IMR-90 (cell line): ENCODE measurements at regions of chr1 and their contacts with region 1.

Region 1: DNA sequence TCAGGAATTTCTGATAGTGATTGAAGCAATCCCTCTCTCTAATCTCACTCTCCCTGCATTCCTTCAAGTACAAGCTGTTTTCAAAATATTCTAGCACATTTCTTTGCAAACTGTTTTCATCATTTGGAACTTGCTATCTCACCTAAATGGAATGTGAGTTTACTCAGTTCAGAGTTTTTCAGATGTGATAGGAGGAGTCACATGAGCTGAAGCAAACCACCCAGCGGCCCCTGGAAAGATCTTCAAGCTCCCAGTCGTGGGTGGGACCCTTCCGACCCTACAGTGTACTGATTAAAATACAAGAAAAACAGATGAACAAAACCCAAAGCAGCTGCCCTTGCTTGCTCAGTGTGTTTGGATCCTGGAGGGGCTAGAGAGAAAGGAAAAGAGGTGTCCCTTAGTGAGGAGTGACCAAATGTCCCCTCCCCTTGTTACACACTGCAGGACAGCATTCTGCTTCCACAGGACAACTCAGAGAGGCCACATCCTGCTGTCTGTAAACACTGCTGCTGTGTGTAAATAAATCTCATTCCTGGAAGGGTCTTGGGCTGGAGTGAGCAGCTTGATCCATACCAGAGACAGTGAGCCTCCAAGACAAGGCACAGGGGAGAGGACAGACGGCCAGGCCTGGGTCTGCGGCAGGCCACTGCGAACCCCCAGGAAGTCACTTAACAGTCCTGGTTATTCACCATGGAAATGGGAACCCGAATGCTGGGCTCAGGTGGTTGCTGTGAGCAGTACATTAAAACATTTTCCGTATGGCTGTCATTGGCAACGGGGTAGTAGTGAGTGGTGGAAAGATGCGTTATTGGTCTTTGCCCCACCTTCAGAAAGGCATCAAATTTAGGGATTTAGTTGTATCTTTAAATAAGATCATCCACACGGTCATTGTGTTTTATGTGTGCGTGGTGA is 229.2 kb downstream of the RHOU start:
- DNase-seq: peak; percentile 94
- ATAC-seq: peak; percentile 96
- H3K4me3 ChIP-seq: no peak overlapping the region
- H3K27ac ChIP-seq: peak overlapping the region; percentile 97
- H3K4me1 ChIP-seq: peaks cover 12% of the 10 kb centered on the region
- H3K27me3 ChIP-seq: no peaks in the 10 kb centered on the region
- CTCF ChIP-seq: no peak
- POLR2A ChIP-seq: no peak
- RAD21 ChIP-seq: 0 out of 2 replicates have a peak, but pooled peaks have one; percentile 1

Region 2: GRCh38 chr1:228120857-228121489 is 843.5 kb before region 1 on chr1:
- CTCF ChIA-PET with region 1: no interaction called
- POLR2A ChIA-PET with region 1: no interaction called
- dilution Hi-C with region 1: no loop called
- in situ Hi-C with region 1: no loop called
- intact Hi-C with region 1: no loop called
- DNase-seq: peak; percentile 26
- ATAC-seq: peak; percentile 32
- H3K4me3 ChIP-seq: no peak overlapping the region
- H3K27ac ChIP-seq: no peak overlapping the region
- H3K4me1 ChIP-seq: peaks cover 2% of the 10 kb centered on the region; the same call in 1 of the 2 replicates
- H3K27me3 ChIP-seq: peaks cover 17% of the 10 kb centered on the region
- CTCF ChIP-seq: no peak
- POLR2A ChIP-seq: no peak
- RAD21 ChIP-seq: no peak

Region 3: GRCh38 chr1:228884615-228885566 is 79.5 kb before region 1 on chr1:
- CTCF ChIA-PET with region 1: no interaction called
- POLR2A ChIA-PET with region 1: no interaction called
- dilution Hi-C with region 1: no loop called
- in situ Hi-C with region 1: no loop called
- intact Hi-C with region 1: no loop called
- DNase-seq: peak; percentile 53
- ATAC-seq: peak; percentile 82
- H3K4me3 ChIP-seq: no peak overlapping the region
- H3K27ac ChIP-seq: no peak overlapping the region
- H3K4me1 ChIP-seq: peaks cover 4% of the 10 kb centered on the region; the same call in 1 of the 2 replicates
- H3K27me3 ChIP-seq: peaks cover 5% of the 10 kb centered on the region
- CTCF ChIP-seq: no peak
- POLR2A ChIP-seq: no peak
- RAD21 ChIP-seq: no peak

Region 4: GRCh38 chr1:228902781-228903433 is 61.5 kb before region 1 on chr1:
- CTCF ChIA-PET with region 1: no interaction called
- POLR2A ChIA-PET with region 1: no interaction called
- dilution Hi-C with region 1: no loop called
- in situ Hi-C with region 1: no loop called
- intact Hi-C with region 1: loop called (anchors 1 kb)
- DNase-seq: peak; percentile 99
- ATAC-seq: peak; percentile 86
- H3K4me3 ChIP-seq: no peak overlapping the region
- H3K27ac ChIP-seq: peak overlapping the region; percentile 27; the same call in 1 of the 2 replicates
- H3K4me1 ChIP-seq: peaks cover 25% of the 10 kb centered on the region
- H3K27me3 ChIP-seq: no peaks in the 10 kb centered on the region
- CTCF ChIP-seq: no peak
- POLR2A ChIP-seq: no peak
- RAD21 ChIP-seq: peak; percentile 8; the same call in 1 of the 2 replicates

Region 5: GRCh38 chr1:229204921-229205777 is 240.7 kb after region 1 on chr1:
- CTCF ChIA-PET with region 1: no interaction called
- POLR2A ChIA-PET with region 1: no interaction called
- dilution Hi-C with region 1: no loop called
- in situ Hi-C with region 1: no loop called
- intact Hi-C with region 1: loop called (anchors 5 kb)
- DNase-seq: peak; percentile 82
- ATAC-seq: peak; percentile 7; the same call in 1 of the 2 replicates
- H3K4me3 ChIP-seq: no peak overlapping the region
- H3K27ac ChIP-seq: peak overlapping the region; percentile 59; the same call in 1 of the 2 replicates
- H3K4me1 ChIP-seq: peaks cover 24% of the 10 kb centered on the region
- H3K27me3 ChIP-seq: no peaks in the 10 kb centered on the region
- CTCF ChIP-seq: no peak
- POLR2A ChIP-seq: no peak
- RAD21 ChIP-seq: no peak